ENCODE measurements at regions of chr7 and their contacts with region 1.

Region 1: DNA sequence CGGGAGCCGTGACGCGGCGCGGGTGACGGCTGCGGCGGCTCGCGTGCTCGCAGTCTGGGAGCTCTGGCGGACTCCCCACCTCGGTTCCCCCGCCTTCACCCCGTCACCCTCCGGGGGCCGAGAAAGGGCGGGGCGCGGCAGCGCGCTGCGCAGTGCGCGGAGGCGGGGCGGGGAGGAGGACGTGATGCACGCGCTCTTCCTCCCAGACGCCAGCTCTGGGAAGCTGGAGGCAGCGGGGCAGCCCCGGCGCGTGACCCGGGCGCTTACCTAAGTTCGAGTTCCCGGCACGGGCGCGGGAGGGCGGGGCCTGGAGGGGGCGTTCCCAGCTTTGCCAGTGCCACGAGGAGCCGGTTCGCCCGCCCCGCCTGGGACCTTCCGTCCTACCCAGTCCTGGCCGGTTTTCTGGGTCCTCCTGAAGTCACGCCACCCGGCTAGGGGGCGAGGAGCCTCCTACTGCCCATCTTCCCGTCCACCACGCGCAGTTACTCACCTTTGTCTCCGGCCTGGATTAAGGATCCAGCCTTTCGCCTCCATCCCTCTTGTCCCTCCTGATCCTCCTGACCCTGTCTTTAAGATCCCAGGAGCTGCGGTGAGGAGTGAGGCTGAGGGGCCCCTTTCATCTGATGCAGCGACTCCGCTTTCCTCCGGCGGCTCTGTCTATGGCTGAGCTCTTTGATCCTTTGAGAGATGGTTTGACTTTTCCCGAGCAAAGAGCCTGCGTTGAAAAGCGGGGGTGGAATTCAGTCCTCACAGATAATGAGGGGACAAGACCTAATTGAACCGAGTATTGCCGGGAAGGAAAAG is 470 bp upstream of the NAMPT start:
- DNase-seq: peak; percentile 97
- H3K4me3 ChIP-seq: peak overlapping the region; percentile 69
- H3K27ac ChIP-seq: peak overlapping the region; percentile 84
- H3K4me1 ChIP-seq: peaks cover 5% of the 10 kb centered on the region
- H3K27me3 ChIP-seq: no peaks in the 10 kb centered on the region
- CTCF ChIP-seq: no peak

Region 2: GRCh38 chr7:106421181-106421762 is 136.0 kb after region 1 on chr7:
- CTCF ChIA-PET with region 1: no interaction called
- POLR2A ChIA-PET with region 1: interaction called, 3 read pairs
- intact Hi-C with region 1: loop called (anchors 5 kb)
- DNase-seq: peak; percentile 94
- H3K4me3 ChIP-seq: no peak overlapping the region
- H3K27ac ChIP-seq: peak overlapping the region; percentile 34
- H3K4me1 ChIP-seq: peaks cover 67% of the 10 kb centered on the region
- H3K27me3 ChIP-seq: no peaks in the 10 kb centered on the region
- CTCF ChIP-seq: no peak

Region 3: GRCh38 chr7:106461993-106462859 is 177.0 kb after region 1 on chr7:
- CTCF ChIA-PET with region 1: interaction called, 4 read pairs
- POLR2A ChIA-PET with region 1: no interaction called
- intact Hi-C with region 1: loop called (anchors 5 kb)
- DNase-seq: peak; percentile 54
- H3K4me3 ChIP-seq: no peak overlapping the region
- H3K27ac ChIP-seq: no peak overlapping the region
- H3K4me1 ChIP-seq: peaks cover 4% of the 10 kb centered on the region
- H3K27me3 ChIP-seq: no peaks in the 10 kb centered on the region
- CTCF ChIP-seq: peak; percentile 60